ENCODE measurements at regions of chr11 and their contacts with region 1.

Region 1: GRCh38 chr11:112588252-112588694 is 327.6 kb upstream of the PLET1 start:
- DNase-seq: peak; percentile 42 to 44
- ATAC-seq: peak; percentile 69

Region 2: GRCh38 chr11:112459001-112459400 is 129.3 kb before region 1 on chr11:
- intact Hi-C with region 1: no loop called
- DNase-seq: no peak
- ATAC-seq: no peak

Region 3: GRCh38 chr11:112780351-112781087 is 192.2 kb after region 1 on chr11:
- intact Hi-C with region 1: no loop called
- DNase-seq: no peak
- ATAC-seq: no peak

Region 4: DNA sequence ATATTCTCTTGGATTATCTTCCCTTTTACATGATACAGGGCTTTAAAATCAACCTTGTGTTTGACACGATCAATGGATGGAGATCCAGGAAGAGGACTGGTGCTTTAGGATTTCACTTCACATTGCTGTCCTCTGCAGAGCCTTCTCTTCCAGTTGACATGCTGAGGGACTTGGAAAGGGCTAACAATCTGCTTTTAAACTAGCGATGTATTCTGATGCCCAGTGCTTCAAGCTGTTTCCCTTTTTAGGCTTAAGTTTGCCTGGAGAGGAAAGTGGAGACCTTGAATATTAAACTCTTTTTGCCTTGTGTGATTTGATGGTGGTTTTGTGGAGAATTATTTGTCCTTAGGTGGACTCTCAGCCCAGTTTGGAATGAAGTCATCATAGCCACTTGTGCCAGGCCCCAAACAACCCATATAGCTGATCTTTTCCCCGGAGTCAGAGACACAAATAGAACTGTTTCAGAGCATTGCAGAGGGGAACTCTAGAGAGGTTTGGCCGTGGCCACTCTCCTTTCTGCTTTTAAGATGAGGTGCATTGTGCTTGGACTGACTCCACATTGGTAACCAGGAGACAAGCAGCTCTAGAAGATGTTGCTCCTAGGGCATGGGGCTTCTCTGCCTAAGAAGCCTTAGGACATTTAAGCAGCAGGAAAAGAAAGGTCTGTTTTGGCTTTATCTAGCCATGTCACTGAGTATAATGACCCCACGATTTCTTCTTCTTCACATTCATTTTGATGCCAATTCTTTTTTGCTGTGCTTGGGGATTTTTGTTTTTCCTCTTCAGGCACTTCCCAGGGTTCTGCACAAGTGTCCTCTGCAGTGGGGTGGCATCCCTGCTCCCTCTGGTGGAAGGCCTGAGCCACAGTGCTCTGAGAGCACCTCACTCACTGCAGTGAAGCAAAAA is 525.8 kb after region 1 on chr11:
- intact Hi-C with region 1: loop called in 1 of 2 experiments (anchors 10 kb)
- DNase-seq: peak; percentile 27 to 32
- ATAC-seq: peak; percentile 64

Region 5: DNA sequence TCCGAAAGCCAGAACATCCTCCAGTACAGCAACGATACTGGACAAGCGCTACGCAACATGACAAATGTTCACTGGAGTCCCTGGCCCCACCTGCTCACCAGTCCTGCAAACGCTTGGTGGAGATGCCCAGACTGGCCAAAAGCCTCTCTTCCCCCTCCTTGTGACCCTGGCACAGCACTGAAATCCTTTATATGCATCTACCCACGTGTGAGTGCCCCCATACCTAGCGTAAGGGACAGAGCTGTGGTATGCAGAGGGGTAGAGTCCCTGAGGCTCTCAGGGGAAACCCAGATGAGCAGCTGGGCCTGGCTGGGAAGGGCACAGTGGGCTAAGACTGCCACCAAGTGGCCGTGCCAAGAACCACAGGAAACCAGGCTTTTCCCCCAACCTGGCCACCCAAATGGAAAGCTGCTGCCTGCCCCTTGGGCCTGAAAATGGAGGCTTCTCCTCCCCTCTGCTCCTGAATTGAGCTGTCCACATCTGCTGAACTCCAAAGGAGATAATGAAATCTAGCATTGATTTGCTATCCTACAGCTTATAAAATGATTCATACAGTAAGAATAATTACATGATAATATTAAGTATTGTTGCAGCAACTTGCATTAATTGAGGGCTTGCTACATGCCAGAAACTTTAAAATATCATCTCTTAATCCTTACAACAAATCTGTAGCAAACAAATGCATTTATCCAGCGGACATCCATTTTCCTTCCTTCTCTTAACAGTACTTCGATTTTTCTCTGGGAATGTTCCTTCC is 701.3 kb after region 1 on chr11:
- intact Hi-C with region 1: loop called in 1 of 2 experiments (anchors 5 kb)
- DNase-seq: peak in 1 of 2 donors; percentile 59
- ATAC-seq: peak; percentile 72

Measured in left colon (tissue), 2 donors.